Sigmoid colon (tissue), 7 donors: ENCODE measurements at regions of chr2 and their contacts with region 1.

Region 1: GRCh38 chr2:227106845-227107759 is 56.9 kb downstream of the COL4A4 start:
- DNase-seq: no peak
- H3K4me3 ChIP-seq: no peak overlapping the region
- H3K27ac ChIP-seq: peak overlapping the region in 1 of 4 donors; percentile 6
- H3K4me1 ChIP-seq: peaks cover 0 to 5% (median 1%) of the 10 kb centered on the region in 4 donors
- H3K27me3 ChIP-seq: no peaks in the 10 kb centered on the region
- CTCF ChIP-seq: peak; percentile 55 to 72 (median 67)
- EP300 ChIP-seq: no peak
- POLR2A ChIP-seq: no peak

Region 2: DNA sequence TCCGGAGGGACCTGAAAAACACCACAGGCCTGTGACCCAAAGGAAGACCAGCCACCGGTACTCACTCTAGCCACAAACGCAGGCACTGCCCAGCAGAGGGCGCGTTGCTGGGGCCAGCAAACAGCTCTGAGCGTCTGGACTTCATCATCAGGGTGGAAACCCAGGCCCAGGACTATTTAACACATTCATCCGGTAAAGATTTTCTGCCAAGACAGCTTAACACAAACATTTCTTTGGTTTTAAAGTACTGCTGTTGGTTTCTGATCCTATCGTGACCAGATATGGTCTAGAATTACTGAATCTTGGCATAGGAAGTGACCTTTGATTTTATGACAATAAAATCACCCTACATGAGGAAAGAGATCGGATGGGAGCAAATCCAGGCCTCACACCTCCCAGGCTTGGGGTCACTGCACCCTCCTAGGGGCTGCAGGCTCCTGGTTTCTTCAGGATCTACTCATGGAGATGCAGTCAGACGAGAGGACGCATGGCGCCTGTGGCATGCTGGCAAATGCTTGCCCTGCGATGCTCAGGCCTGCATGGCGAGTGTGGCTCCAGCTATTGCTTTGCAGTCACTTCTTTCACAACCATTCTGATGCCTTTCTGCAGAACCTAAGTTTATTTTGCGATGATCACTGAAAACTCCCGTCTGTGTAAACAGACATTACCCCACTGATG is 73.5 kb before region 1 on chr2:
- intact Hi-C with region 1: loop called (anchors 1 kb)
- DNase-seq: peak; percentile 79
- H3K4me3 ChIP-seq: no peak overlapping the region
- H3K27ac ChIP-seq: peak overlapping the region in 3 of 4 donors; percentile 47 to 72 (median 62)
- H3K4me1 ChIP-seq: peaks cover 0 to 27% (median 15%) of the 10 kb centered on the region in 4 donors
- H3K27me3 ChIP-seq: no peaks in the 10 kb centered on the region
- CTCF ChIP-seq: peak; percentile 23 to 55 (median 46)
- EP300 ChIP-seq: no peak
- POLR2A ChIP-seq: no peak

Region 3: GRCh38 chr2:227363756-227364155 is 256.7 kb after region 1 on chr2:
- intact Hi-C with region 1: no loop called
- DNase-seq: no peak
- H3K4me3 ChIP-seq: no peak overlapping the region
- H3K27ac ChIP-seq: no peak overlapping the region
- H3K4me1 ChIP-seq: peaks cover 0 to 14% (median 9%) of the 10 kb centered on the region in 4 donors
- H3K27me3 ChIP-seq: no peaks in the 10 kb centered on the region
- CTCF ChIP-seq: no peak
- EP300 ChIP-seq: no peak
- POLR2A ChIP-seq: no peak